ENCODE measurements at regions of chr2 and their contacts with region 1.

Region 1: DNA sequence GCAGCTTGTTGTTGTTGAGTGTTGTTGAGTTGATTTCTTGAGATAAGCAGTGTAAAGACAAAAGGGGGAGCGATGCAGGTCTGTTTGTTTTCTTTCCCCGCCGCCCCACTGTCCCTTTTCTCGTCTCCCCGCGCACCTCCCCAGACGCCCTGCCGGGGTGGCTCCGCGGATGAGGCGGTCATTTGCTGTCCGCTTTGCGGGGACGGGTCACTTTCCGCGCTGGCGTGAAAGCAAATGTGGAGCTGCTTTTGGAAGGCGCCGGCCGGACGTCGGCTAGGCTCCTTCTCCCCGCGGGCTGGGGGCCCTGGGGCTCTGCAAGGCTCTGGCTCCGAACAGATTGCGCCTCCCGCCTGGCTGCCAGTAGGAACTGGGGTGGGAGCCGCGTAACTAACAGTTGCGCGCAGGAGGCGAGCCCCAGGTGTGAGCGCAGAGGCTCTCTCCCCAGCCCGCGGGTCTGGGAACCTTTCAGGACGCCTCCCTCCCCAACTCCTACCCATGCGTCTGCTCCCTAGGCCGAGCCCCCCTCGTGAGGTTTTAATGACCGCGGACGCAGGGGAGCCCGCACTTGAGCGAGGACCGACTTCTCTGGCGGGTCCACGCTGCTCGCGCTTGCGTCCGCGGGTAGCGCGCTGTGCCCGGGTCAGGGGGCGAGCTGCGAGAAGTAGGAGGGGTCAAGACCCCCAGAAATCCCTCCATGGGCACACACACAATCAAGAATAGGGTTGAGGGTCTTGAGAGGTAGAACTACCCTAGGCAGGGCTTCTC is 146.6 kb downstream of the MEIS1 start:
- DNase-seq: no peak

Region 2: DNA sequence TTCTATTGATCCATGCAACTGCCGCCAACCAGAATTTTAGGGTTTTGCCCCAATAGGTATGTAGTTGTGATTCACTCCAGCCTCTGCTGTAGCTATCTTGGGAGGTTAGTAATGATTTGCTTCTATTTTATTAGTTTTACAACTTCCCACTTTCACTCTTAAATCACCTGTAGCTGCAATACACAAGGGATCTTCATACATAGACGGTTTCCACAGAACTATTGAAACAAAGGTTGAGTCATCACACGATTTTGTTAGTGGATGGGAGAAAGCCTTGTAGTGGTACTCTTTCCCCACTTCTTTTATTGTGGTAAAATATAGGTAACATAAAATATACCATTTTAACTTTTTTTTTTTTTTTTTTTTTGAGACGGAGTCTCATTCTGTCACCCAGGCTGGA is 1044.9 kb before region 1 on chr2:
- intact Hi-C with region 1: no loop called
- DNase-seq: no peak

Region 3: DNA sequence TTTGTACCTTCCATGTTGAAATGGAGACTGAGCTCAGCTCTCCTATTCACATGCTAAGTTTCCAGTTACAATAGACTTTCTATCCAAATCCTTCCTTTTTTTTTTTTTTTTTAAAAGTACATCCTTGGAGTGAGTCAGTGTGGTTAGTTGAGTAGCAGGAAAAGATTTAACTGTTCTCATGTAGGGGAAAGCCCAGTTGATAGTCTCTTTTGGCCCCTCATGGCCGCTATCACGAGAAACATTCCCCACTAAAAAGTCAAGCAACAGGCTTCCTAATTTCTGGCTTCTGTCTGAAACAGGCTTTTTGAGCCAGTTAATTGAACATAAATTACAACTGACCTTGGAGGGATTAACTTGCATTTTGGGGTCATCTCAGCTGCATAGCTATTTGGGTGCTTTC is 14.7 kb after region 1 on chr2:
- intact Hi-C with region 1: no loop called
- DNase-seq: no peak

Region 4: GRCh38 chr2:66696374-66696773 is 114.9 kb after region 1 on chr2:
- intact Hi-C with region 1: no loop called
- DNase-seq: no peak

Region 5: GRCh38 chr2:67840460-67841068 is 1259.0 kb after region 1 on chr2:
- intact Hi-C with region 1: loop called (anchors 5 kb)
- DNase-seq: peak; percentile 78

Measured in cardiac septum (tissue), 1 donor.